ENCODE measurements at regions of chr11 and their contacts with region 1.

Region 1: GRCh38 chr11:76152086-76152681 is 54.1 kb downstream of the WNT11 start:
- DNase-seq: peak; percentile 92
- ATAC-seq: peak; percentile 95
- H3K4me3 Mint-ChIP-seq: peak overlapping the region; percentile 60
- H3K27ac Mint-ChIP-seq: peak overlapping the region; percentile 12
- H3K4me1 Mint-ChIP-seq: peaks cover 25% of the 10 kb centered on the region
- H3K27me3 Mint-ChIP-seq: peaks cover 14% of the 10 kb centered on the region

Region 2: DNA sequence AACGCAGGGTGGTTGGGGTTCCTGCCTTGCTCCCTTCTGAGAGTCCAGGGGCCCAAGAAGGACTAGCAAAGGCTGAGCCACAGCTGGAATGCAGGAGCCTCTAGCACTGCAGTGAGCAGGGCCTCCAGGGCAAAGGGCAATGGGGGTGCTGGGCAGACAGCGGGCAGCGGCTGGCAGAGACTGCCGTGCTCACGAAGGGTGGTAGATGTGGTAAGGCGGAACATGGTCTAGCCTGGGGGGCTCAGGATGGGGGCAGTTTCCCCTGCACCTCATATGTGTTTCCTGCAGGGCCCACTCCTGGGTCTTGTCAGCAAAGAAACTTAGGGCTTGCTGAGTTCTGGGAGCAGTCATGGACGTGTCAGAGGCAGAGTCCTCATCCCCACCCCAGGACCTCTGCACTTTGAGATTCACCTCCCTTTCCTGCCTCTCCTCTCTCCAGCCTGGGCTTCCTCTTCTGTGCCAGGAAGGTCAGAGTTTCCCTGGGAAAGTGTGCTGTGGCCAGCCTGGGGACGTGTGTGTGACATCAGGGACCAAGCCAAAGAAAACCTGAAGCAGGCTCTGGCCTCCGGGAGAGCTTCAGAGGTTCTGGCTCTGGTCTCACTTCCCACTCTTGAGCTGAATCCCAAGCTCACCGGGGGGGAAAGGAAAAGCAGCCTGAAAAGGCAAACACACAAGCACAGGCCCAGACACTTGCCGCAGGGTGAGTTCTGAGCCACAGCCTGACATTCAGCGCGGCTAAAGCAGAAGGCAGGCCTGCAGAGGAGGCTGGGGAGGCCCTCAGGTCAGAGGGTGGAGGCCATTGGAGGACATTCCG is 430.1 kb before region 1 on chr11:
- CTCF ChIA-PET with region 1: interaction called, 12 read pairs
- DNase-seq: no peak
- ATAC-seq: no peak
- H3K4me3 Mint-ChIP-seq: no peak overlapping the region
- H3K27ac Mint-ChIP-seq: no peak overlapping the region
- H3K4me1 Mint-ChIP-seq: peaks cover 2% of the 10 kb centered on the region
- H3K27me3 Mint-ChIP-seq: peaks cover 1% of the 10 kb centered on the region

Region 3: DNA sequence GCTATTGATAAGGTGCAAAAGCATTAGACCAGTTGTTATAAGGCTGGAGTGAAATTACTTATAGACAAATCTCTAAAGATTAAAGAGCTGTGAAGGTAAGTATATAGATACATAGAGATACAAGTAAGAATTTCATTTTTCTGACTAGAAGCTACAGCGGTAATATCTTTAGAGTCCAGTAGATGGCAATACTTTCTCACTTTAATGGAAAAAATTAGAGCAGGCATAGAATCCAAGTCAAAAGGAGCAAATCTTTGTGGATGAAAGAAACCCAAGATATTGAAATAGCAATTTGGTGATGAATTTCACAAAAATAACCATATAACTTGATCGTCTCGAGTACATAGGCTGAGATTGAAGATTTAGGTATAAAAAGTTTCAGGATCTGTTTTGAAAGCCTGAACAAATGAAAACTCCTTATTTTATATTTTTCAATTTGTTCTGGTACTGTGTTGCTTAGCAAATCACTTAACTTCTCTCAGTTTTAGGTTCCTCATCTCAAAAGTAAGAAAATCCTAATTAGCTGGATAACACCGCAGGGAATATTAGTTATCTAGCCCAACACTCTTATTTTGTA is 255.3 kb before region 1 on chr11:
- CTCF ChIA-PET with region 1: interaction called, 63 read pairs
- DNase-seq: no peak
- ATAC-seq: peak; percentile 47
- H3K4me3 Mint-ChIP-seq: no peak overlapping the region
- H3K27ac Mint-ChIP-seq: no peak overlapping the region
- H3K4me1 Mint-ChIP-seq: peaks cover 2% of the 10 kb centered on the region
- H3K27me3 Mint-ChIP-seq: no peaks in the 10 kb centered on the region

Region 4: GRCh38 chr11:75982309-75982708 is 169.9 kb before region 1 on chr11:
- CTCF ChIA-PET with region 1: no interaction called
- DNase-seq: no peak
- ATAC-seq: no peak
- H3K4me3 Mint-ChIP-seq: no peak overlapping the region
- H3K27ac Mint-ChIP-seq: no peak overlapping the region
- H3K4me1 Mint-ChIP-seq: no peaks in the 10 kb centered on the region
- H3K27me3 Mint-ChIP-seq: no peaks in the 10 kb centered on the region

Region 5: GRCh38 chr11:76131671-76132631 is 20.2 kb before region 1 on chr11:
- CTCF ChIA-PET with region 1: interaction called, 14 read pairs
- DNase-seq: no peak
- ATAC-seq: no peak
- H3K4me3 Mint-ChIP-seq: no peak overlapping the region
- H3K27ac Mint-ChIP-seq: no peak overlapping the region
- H3K4me1 Mint-ChIP-seq: peaks cover 4% of the 10 kb centered on the region
- H3K27me3 Mint-ChIP-seq: no peaks in the 10 kb centered on the region

Measured in activated CD8-positive, alpha-beta memory T cell treated with anti-CD3 and anti-CD28 coated beads, Interleukin-2, amount 10 ng/mL, durations not matched to agents 7 days and 5 days (primary cell).